Right ventricle myocardium inferior (tissue), 1 donor: ENCODE measurements at regions of chr13 and their contacts with region 1.

Region 1: GRCh38 chr13:89695343-89696257 is 1651.9 kb upstream of the MIR17HG start:
- DNase-seq: no peak
- ATAC-seq: peak; percentile 56

Region 2: DNA sequence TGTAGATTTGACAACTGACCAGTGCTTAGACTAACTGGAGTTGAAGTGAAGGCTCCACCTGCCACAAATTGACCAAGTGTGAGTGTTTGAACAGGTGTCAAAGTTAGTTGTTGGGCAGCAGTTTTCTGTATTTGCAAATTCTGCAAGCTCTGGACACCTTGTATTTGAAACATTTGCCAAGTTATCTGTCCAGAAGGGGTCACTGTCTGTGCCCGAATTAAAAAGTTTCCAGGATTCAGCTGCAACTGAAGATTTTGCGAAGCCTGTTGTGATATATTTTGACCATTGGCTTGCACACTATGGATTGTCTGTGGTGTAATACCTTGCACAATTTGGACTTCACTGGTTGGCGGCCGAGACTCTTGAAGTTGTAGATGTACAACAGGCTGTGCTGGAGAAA is 333.7 kb before region 1 on chr13:
- intact Hi-C with region 1: loop called (anchors 5 kb)
- DNase-seq: no peak
- ATAC-seq: no peak

Region 3: GRCh38 chr13:89910166-89910565 is 214.6 kb after region 1 on chr13:
- intact Hi-C with region 1: no loop called
- DNase-seq: no peak
- ATAC-seq: no peak